Activated CD4-positive, alpha-beta memory T cell treated with anti-CD3 and anti-CD28 coated beads for 36 hours (primary cell): ENCODE measurements at regions of chr10 and their contacts with region 1.

Region 1: DNA sequence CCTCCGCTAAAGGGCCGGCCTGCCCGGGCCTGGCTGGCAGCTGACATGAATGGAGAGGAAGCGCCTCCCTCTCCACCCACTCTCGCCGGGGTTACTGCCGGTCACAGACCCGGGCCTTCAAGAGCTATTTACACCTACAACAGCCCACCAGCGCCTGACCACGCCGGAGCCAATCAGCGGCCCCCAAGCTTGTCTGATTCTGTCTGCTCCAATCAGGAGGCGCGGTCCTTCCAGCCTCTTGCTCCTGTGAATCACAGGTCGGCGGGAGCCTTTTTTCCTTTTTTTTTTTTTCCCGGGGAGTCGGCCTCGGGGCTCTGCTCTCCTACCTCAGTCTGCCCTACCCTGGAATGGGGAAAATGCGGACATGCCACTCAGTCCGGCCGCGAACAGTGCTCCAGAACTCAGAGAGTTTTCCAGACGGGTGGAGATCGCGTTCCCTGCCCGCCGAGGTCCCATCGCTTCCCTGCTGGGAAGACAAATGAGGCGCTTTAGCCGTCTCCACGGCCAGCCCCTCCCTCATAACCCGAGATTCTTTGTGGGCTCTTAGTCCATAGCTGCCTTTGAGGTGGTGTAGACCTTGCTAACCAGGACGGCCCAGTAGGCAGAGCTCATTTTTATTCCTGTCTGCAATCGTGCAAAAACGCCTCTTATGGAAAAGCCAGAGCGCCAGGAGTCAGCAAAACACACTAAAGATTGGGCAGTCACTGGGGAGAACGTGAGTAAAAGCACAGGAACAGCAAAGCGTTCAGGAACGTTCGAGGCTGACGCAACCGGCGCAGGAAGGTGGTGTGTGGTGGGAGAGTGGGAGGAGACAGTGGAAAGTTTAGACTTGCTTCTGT is 26.5 kb downstream of the SCD start:
- DNase-seq: peak; percentile 99
- H3K4me3 Mint-ChIP-seq: no peak overlapping the region
- H3K27ac Mint-ChIP-seq: no peak overlapping the region
- H3K4me1 Mint-ChIP-seq: peaks cover 35% of the 10 kb centered on the region
- H3K27me3 Mint-ChIP-seq: no peaks in the 10 kb centered on the region

Region 2: DNA sequence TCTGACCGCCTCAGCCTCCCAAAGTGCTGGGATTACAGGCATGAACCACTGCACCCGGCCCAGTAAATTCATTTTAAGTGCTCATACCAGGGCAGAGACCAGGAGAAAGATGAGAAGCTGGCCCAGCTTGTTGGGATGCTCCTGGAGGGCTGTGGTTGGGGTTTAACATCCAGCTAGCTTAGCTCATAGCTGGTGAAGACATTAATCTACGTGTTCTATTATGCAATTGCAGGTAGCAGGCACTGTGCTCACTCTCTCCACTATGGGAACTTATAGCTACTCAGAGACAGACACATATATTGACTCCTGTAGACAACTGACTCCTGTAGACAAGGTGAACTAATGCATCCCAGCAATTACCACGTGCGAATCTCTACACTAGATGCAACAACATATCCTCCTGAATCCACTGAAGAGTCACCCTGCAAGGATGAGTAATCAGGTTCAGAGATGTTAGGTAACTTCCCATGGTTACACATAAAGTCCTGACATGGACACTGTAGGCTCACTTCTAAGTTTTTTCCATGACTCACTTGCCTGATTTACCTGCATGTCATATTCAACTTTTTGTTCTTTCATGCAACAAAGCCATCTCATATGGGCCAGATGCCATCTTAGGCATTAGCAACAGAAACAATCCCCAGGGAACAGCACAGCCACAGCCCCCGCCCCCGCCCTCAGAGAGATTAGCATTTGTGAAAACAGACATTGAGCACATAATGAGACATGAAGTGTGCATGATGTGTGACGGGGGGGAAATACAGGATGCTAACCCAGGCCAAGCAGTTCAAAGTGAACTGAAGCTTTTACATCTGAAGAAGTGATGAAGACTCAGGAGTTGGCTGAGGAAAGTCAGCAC is 224.9 kb before region 1 on chr10:
- CTCF ChIA-PET with region 1: no interaction called
- POLR2A ChIA-PET with region 1: no interaction called
- intact Hi-C with region 1: loop called (anchors 1 kb)
- DNase-seq: peak; percentile 78
- H3K4me3 Mint-ChIP-seq: no peak overlapping the region
- H3K27ac Mint-ChIP-seq: peak overlapping the region; percentile 76
- H3K4me1 Mint-ChIP-seq: peaks cover 28% of the 10 kb centered on the region
- H3K27me3 Mint-ChIP-seq: peaks cover 3% of the 10 kb centered on the region

Region 3: GRCh38 chr10:100286051-100287033 is 87.2 kb before region 1 on chr10 and contains the start of gene BLOC1S2:
- CTCF ChIA-PET with region 1: no interaction called
- POLR2A ChIA-PET with region 1: no interaction called
- intact Hi-C with region 1: loop called (anchors 1 kb)
- DNase-seq: peak; percentile 91
- H3K4me3 Mint-ChIP-seq: peak within 1 kb of the TSS; percentile 98
- H3K27ac Mint-ChIP-seq: peak within 1 kb of the TSS; percentile 99
- H3K4me1 Mint-ChIP-seq: peaks cover 23% of the 10 kb centered on the region
- H3K27me3 Mint-ChIP-seq: peaks cover 1% of the 10 kb centered on the region
- total RNA-seq, gene BLOC1S2: 50.5 to 51.5 TPM

Region 4: DNA sequence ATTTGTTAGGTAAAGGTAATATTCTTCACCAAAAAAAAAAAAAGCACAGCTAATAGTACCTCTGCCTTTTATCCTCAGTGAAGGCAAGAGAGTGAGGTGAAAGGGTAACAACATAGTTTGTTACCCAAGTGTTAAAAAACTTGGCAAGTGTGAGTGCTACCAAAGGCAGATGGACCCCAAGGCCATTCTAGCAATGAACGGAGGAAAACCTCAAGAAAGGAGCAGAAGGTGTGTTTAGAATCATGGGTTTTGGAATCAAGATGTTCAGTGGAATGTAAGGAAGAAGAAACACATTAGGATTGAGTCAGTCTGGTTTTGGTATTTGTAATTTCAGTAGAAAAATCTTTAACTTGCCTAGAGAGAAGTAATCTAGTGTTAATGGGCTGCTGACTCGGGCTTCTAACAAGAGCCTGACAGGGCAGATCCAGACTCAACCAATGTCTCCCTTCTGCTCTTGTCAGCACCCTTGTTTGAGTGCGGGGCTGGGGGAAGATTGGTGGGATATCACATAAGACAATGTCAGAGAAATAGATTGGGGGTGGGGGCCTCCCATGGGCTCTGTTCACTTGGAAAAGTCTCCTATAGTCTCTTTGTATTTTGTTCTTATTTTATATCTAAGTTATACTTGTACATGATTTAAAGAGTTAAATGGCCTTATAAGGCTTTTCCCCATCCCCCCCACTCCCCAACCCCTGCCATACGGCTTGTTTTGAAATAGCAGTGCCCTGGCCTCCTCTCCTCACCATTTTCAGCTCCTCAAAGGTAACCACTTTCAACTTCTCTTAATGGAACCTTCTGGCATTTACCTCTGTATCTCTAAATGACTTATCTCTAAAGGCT is 17.9 kb after region 1 on chr10:
- CTCF ChIA-PET with region 1: interaction called, 4 read pairs
- POLR2A ChIA-PET with region 1: interaction called, 4 read pairs
- intact Hi-C with region 1: loop called (anchors 1 kb)
- DNase-seq: peak; percentile 16
- H3K4me3 Mint-ChIP-seq: no peak overlapping the region
- H3K27ac Mint-ChIP-seq: peak overlapping the region; percentile 38
- H3K4me1 Mint-ChIP-seq: peaks cover 16% of the 10 kb centered on the region
- H3K27me3 Mint-ChIP-seq: no peaks in the 10 kb centered on the region

Region 5: GRCh38 chr10:100508691-100509150 is 135.2 kb after region 1 on chr10:
- CTCF ChIA-PET with region 1: interaction called, 4 read pairs
- POLR2A ChIA-PET with region 1: interaction called, 10 read pairs
- intact Hi-C with region 1: loop called (anchors 1 kb)
- DNase-seq: peak; percentile 56
- H3K4me3 Mint-ChIP-seq: peak overlapping the region; percentile 38
- H3K27ac Mint-ChIP-seq: peak overlapping the region; percentile 88
- H3K4me1 Mint-ChIP-seq: peaks cover 68% of the 10 kb centered on the region
- H3K27me3 Mint-ChIP-seq: no peaks in the 10 kb centered on the region

Region 6: GRCh38 chr10:100683545-100684300 is 310.2 kb after region 1 on chr10:
- CTCF ChIA-PET with region 1: no interaction called
- POLR2A ChIA-PET with region 1: no interaction called
- intact Hi-C with region 1: no loop called
- DNase-seq: no peak
- H3K4me3 Mint-ChIP-seq: no peak overlapping the region
- H3K27ac Mint-ChIP-seq: no peak overlapping the region
- H3K4me1 Mint-ChIP-seq: no peaks in the 10 kb centered on the region
- H3K27me3 Mint-ChIP-seq: peaks cover 68% of the 10 kb centered on the region

Region 7: DNA sequence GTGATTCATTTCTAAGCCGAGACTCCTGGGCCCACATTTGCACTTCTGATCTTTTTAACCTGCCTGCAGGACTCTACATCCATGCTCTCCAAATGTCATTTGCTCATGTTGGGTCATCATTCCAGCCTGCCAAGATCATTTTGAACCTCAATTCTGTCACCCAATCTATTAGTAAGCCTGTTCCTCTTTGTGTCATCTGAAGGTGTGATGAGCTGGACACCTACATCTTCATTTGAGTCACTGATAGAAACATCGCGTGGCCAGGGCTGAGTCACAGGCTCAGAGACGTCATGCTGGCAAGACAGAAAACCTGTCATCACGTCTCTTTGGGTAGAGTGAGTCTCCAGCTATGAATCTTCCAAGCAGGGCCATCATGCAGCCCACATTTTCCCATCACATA is 473.9 kb after region 1 on chr10:
- CTCF ChIA-PET with region 1: no interaction called
- POLR2A ChIA-PET with region 1: no interaction called
- intact Hi-C with region 1: loop called (anchors 5 kb)
- DNase-seq: peak; percentile 94
- H3K4me3 Mint-ChIP-seq: peak overlapping the region; percentile 18
- H3K27ac Mint-ChIP-seq: peak overlapping the region; percentile 86
- H3K4me1 Mint-ChIP-seq: peaks cover 28% of the 10 kb centered on the region
- H3K27me3 Mint-ChIP-seq: peaks cover 48% of the 10 kb centered on the region